K562 (cell line): ENCODE measurements at regions of chr6 and their contacts with region 1.

Region 1: GRCh38 chr6:41779793-41780545 is at the start of gene FRS3:
- DNase-seq: peak; percentile 98 to 99 (median 98)
- ATAC-seq: peak; percentile 94
- H3K4me3 ChIP-seq: peak within 1 kb of the TSS; percentile 69
- H3K27ac ChIP-seq: peak within 1 kb of the TSS; percentile 51; the same call in 2 of the 3 replicates
- H3K4me1 ChIP-seq: peaks cover 17 to 27% of the 10 kb centered on the region in 2 experiments
- H3K27me3 ChIP-seq: no peaks in the 10 kb centered on the region
- CTCF ChIP-seq: peak; percentile 94 to 99 (median 98)
- EP300 ChIP-seq: peak; percentile 44
- POLR2A ChIP-seq: no peak
- RAD21 ChIP-seq: peak; percentile 99
- polyA plus RNA-seq, gene FRS3: 0.03 to 0.06 TPM

Region 2: DNA sequence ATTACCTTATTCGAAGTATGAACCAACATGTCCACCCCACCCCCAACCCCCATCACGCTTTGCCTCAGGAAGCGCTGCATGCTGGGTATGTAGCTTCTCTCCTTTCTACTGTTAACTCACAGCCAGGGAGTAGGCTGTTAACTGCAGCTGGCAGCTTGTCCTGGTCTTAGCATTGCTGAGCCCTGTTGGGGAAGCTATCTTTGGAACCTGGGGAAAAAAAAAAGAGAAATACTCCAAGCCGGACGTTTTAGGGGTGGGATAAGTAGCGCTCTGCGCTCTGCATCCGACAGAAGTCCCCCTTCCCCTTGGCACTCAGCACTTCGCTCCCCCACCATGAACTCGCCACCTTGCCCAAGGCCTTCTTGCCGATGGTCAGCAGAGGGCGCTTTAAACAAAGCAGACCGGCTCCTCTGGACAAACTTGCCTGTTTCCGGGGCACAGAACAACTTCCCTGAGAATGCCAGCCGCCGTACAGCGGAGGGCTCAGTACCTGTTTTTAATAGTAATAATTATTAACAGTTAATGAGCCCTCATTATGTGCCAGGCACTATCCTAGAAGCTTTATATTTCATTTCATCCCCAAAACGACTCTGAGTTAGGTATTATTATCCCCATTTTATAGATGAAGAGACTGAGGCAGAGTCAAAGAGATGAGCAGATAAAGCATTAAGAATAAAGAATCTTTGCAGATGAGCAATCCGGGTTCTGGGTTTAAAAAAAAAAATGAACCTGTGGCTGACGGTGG is 176.9 kb before region 1 on chr6:
- CTCF ChIA-PET with region 1: interaction called, 11 read pairs
- POLR2A ChIA-PET with region 1: no interaction called
- in situ Hi-C with region 1: no loop called
- intact Hi-C with region 1: loop called (anchors 5 kb)
- DNase-seq: peak; percentile 83 to 87 (median 84)
- ATAC-seq: peak; percentile 85
- H3K4me3 ChIP-seq: no peak overlapping the region
- H3K27ac ChIP-seq: no peak overlapping the region
- H3K4me1 ChIP-seq: peaks cover 0 to 9% of the 10 kb centered on the region in 2 experiments; a peak in 3 of 5 replicates
- H3K27me3 ChIP-seq: peaks cover 15 to 28% of the 10 kb centered on the region in 2 experiments; a peak in 3 of 5 replicates
- CTCF ChIP-seq: peak; percentile 92 to 94 (median 94)
- EP300 ChIP-seq: no peak
- POLR2A ChIP-seq: no peak
- RAD21 ChIP-seq: peak; percentile 83 to 92

Region 3: DNA sequence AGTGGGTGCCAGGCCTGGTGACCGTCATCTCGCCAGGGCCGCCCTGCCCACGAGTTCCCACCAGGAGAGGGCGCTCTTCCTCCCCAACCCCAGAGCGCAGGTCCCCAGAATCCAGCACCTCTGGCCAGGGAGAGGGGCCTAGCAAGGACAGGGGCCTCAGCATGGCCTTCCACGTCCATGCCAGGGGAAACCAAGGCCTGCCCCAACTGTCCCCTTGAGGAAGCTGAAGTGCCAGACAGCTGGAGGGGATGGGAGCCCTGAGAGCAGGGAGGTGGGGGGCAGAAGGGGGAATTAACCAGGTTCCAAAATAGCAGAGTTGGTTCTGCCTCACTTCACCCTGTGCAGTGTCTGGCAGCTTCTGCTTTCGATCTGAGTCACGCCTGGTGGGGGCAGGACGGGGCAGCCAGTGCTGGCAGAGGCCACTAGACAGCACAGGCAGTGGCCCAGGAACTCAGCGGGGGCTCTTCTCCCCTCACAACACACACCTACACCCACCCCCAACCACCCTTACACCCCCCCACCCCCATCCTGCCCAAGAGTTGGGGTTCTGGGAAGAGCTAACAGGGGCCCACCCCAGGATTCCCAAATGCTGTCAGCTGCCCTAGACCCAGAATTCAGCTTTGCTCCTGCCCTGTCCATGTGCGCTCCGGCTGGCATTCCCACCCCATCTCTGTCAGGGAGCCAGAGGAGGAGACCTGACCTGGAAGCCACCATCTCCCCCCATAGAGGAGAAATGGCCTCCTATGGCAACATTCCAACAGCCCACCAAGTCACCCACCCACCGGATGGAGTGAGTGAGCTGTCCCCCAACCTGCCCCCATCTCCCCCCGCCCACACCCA is 73.8 kb before region 1 on chr6:
- CTCF ChIA-PET with region 1: interaction called, 30 read pairs
- POLR2A ChIA-PET with region 1: no interaction called
- in situ Hi-C with region 1: no loop called
- intact Hi-C with region 1: loop called (anchors 1 kb)
- DNase-seq: peak; percentile 78 to 95 (median 92)
- ATAC-seq: peak; percentile 92
- H3K4me3 ChIP-seq: no peak overlapping the region
- H3K27ac ChIP-seq: no peak overlapping the region
- H3K4me1 ChIP-seq: peaks cover 0 to 10% of the 10 kb centered on the region in 2 experiments; a peak in 2 of 5 replicates
- H3K27me3 ChIP-seq: peaks cover 0 to 33% of the 10 kb centered on the region in 2 experiments; a peak in 4 of 5 replicates
- CTCF ChIP-seq: peak; percentile 86 to 93 (median 90)
- EP300 ChIP-seq: no peak
- POLR2A ChIP-seq: no peak
- RAD21 ChIP-seq: peak; percentile 77 to 87

Region 4: DNA sequence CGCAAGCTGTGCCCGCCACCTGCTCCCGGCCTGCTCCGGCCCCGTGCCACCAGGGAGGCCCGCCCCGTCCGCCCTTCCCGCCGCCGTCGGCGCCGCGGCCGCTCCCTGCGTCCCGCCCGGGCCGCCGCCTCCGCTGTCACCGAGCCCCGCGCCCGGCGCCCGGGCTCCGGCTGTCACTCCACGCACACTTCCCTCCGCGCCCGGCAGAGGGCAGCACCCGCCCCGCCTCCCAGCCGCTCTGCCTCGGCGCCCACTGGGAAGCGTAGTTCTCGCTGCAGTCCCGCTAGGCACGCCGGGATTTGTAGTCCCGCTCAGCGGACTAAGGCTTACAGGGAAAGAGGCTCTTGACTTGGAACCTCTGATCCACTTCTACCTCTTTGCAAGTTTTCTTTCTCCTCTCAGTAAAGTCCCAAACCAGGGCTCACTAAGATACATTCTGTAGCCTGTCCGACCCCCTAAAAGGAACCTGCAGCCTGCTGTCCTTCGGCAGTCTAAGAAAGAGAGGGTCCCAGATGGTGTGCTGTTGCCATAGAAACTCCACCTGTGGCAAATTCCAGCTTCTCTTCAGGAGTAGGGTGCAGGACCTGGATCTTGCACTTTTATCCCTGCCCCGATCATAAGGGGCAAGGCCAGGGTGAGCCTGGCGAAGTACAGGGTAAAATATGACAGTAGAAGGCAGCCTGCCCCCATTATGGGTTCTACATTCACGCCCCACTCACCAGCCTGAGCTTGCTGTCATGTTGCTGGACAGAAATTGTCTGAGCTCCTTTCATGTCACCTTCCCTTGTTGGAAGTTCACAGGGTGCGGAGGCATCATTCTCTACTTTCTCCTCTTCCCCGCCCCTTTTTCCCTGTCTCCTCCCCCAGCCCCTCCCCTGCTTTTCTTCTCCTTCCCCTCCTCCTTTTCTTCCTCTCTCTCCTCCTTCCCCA is 44.3 kb before region 1 on chr6 and contains the start of gene TFEB:
- CTCF ChIA-PET with region 1: interaction called, 19 read pairs
- POLR2A ChIA-PET with region 1: interaction called, 5 read pairs
- in situ Hi-C with region 1: no loop called
- intact Hi-C with region 1: loop called (anchors 1 kb)
- DNase-seq: peak; percentile 95 to 98 (median 97)
- ATAC-seq: peak; percentile 89
- H3K4me3 ChIP-seq: peak within 1 kb of the TSS; percentile 63
- H3K27ac ChIP-seq: no peak within 1 kb of the TSS
- H3K4me1 ChIP-seq: peaks cover 5 to 29% of the 10 kb centered on the region in 2 experiments
- H3K27me3 ChIP-seq: peaks cover 11 to 33% of the 10 kb centered on the region in 2 experiments; a peak in 3 of 5 replicates
- CTCF ChIP-seq: peak; percentile 91 to 97 (median 94)
- EP300 ChIP-seq: 0 out of 2 replicates have a peak, but pooled peaks have one; percentile 24
- POLR2A ChIP-seq: no peak
- RAD21 ChIP-seq: peak; percentile 78 to 82
- polyA plus RNA-seq, gene TFEB: 0.04 to 0.07 TPM

Region 5: DNA sequence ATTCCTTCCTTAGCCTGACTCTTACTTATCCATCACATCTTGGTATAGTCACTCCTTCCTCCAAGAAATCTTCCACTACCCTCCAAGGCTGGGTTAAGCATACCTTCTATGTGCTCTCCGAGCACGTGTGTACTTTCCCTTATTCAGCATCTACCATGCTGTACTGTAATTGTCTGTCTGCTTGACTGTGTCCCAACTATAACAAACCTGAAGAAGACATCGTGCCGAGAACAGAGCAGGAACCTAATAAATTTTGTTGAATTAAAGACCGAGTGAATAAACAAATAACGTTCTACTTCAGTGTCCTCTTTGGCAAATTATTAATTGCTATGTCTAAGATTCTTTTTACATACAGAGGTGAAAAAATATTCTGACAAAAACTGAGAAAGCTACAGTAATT is 79.4 kb after region 1 on chr6:
- CTCF ChIA-PET with region 1: no interaction called
- POLR2A ChIA-PET with region 1: no interaction called
- in situ Hi-C with region 1: no loop called
- intact Hi-C with region 1: no loop called
- DNase-seq: no peak
- ATAC-seq: no peak
- H3K4me3 ChIP-seq: no peak overlapping the region
- H3K27ac ChIP-seq: no peak overlapping the region
- H3K4me1 ChIP-seq: peaks cover 0 to 7% of the 10 kb centered on the region in 2 experiments; a peak in 2 of 5 replicates
- H3K27me3 ChIP-seq: no peaks in the 10 kb centered on the region
- CTCF ChIP-seq: no peak
- EP300 ChIP-seq: no peak
- POLR2A ChIP-seq: no peak
- RAD21 ChIP-seq: no peak

Region 6: DNA sequence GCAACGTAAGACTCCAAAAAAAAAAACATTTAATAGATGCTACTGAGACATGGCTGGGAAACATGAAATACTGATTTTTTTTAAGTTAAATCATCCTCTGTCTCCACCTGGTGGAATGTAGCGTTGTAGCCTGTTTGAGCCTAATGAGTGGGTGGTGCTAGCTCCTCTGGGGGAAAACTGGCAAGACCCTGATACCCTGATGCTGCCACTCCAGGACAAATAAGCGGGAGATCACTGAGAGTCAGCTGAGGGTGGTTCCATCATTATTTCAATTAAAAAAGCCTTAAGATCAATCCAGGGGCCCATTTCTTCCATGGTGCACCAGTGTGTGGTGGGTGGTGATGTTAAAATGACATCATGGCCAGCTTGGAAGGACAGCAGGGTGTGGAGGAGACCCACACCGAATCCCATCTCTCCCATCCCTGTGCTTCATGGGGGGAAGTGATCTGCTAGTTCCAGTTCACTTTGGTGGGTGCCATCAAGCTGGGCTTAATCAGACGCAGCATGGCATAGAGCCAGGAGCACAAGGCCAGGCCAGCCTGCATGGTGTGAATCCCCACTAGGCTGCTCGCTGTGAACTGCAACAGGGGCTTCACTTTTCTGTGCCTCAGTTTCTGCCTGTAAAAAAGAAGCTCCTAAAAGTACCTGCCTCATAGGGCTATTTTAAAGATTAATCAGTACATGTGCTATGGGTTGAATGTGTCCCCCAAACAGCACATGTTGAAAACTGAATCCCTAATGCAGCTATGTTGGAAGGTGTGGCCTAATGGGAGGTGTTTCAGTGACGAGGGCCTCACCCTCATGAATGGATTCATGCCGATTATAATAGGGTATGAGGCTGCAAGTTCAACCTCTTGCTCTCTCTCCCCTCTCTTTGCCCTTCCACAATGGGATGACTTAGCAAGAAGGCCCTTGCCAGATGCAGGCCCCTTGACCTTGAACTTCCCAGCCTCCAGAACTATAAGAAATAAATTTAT is 450.7 kb after region 1 on chr6:
- CTCF ChIA-PET with region 1: interaction called, 10 read pairs
- POLR2A ChIA-PET with region 1: interaction called, 3 read pairs
- in situ Hi-C with region 1: loop called (anchors 10 kb)
- intact Hi-C with region 1: no loop called
- DNase-seq: peak in 3 of 4 experiments; percentile 40 to 68 (median 58)
- ATAC-seq: peak; percentile 69
- H3K4me3 ChIP-seq: no peak overlapping the region
- H3K27ac ChIP-seq: no peak overlapping the region
- H3K4me1 ChIP-seq: peaks cover 14 to 21% of the 10 kb centered on the region in 2 experiments
- H3K27me3 ChIP-seq: no peaks in the 10 kb centered on the region
- CTCF ChIP-seq: peak; percentile 62 to 83 (median 80)
- EP300 ChIP-seq: no peak
- POLR2A ChIP-seq: no peak
- RAD21 ChIP-seq: peak; percentile 66 to 82